Prostate gland (tissue), 2 donors: ENCODE measurements at regions of chr17 and their contacts with region 1.

Region 1: GRCh38 chr17:76304226-76305134 is 3.6 kb downstream of the QRICH2 start:
- DNase-seq: no peak
- H3K4me3 ChIP-seq: no peak overlapping the region
- H3K27ac ChIP-seq: no peak overlapping the region
- H3K4me1 ChIP-seq: no peaks in the 10 kb centered on the region
- H3K27me3 ChIP-seq: no peaks in the 10 kb centered on the region
- CTCF ChIP-seq: no peak
- POLR2A ChIP-seq: no peak

Region 2: DNA sequence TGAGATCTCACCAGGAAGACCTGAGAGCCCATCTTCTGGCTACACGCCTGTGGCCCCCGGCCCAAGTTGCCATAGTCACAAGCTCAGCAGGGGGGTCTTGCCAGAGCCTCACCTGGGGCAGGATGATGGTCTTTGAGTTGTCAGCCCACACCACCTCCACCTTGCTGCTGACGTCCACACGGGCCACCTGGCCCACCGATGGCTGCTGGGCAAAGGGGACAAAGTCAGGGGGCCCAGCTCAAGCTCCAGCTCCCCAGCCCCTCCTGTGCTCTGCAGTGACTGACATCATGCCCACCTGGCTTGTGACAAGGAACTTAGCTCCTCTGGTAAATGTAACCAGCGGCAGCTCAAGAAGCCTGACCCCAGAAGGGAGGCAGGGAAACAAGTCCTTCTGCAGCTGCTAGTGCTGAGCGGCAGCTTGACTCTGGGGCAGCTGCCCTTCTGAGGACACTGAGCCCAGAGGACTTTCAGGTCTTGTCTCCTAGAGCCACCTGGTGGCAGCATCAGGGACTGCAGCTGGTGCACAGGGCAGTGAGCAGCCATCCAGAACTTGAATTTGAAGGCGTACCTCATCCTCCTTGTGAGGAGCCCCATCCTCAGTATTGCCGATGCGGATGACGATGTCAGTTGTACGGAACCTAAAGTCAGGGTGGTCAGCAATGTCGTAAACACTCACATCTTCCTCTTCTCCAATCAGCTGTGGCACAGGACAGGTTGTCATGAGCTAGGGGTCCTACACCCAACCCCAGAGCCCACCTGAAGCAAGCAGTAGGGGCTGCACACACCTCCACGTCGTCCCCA is 93.4 kb after region 1 on chr17:
- intact Hi-C with region 1: loop called (anchors 2 kb)
- DNase-seq: peak; percentile 88
- H3K4me3 ChIP-seq: no peak overlapping the region
- H3K27ac ChIP-seq: no peak overlapping the region
- H3K4me1 ChIP-seq: no peaks in the 10 kb centered on the region
- H3K27me3 ChIP-seq: no peaks in the 10 kb centered on the region
- CTCF ChIP-seq: peak; percentile 94 to 98 (median 97)
- POLR2A ChIP-seq: no peak